ENCODE measurements at regions of chr4 and their contacts with region 1.

Region 1: GRCh38 chr4:154779362-154779947 is 1.6 kb upstream of the RBM46 start:
- DNase-seq: no peak
- ATAC-seq: peak; percentile 63 to 83 (median 79)
- H3K4me3 ChIP-seq: no peak overlapping the region
- H3K27ac ChIP-seq: no peak overlapping the region
- H3K4me1 ChIP-seq: no peaks in the 10 kb centered on the region
- H3K27me3 ChIP-seq: peaks cover 0 to 6% (median 0%) of the 10 kb centered on the region in 4 donors
- CTCF ChIP-seq: peak; percentile 6 to 46 (median 42)

Region 2: GRCh38 chr4:154314248-154314647 is 465.2 kb before region 1 on chr4:
- intact Hi-C with region 1: no loop called
- DNase-seq: peak in 1 of 6 donors; percentile 18
- ATAC-seq: peak in 3 of 4 donors; percentile 41 to 68 (median 68)
- H3K4me3 ChIP-seq: no peak overlapping the region
- H3K27ac ChIP-seq: no peak overlapping the region
- H3K4me1 ChIP-seq: no peaks in the 10 kb centered on the region
- H3K27me3 ChIP-seq: no peaks in the 10 kb centered on the region
- CTCF ChIP-seq: peak in 1 of 4 donors; percentile 13

Region 3: GRCh38 chr4:154642373-154643009 is 137.0 kb before region 1 on chr4:
- intact Hi-C with region 1: loop called (anchors 5 to 10 kb)
- DNase-seq: no peak
- ATAC-seq: no peak
- H3K4me3 ChIP-seq: no peak overlapping the region
- H3K27ac ChIP-seq: no peak overlapping the region
- H3K4me1 ChIP-seq: no peaks in the 10 kb centered on the region
- H3K27me3 ChIP-seq: no peaks in the 10 kb centered on the region
- CTCF ChIP-seq: no peak

Region 4: DNA sequence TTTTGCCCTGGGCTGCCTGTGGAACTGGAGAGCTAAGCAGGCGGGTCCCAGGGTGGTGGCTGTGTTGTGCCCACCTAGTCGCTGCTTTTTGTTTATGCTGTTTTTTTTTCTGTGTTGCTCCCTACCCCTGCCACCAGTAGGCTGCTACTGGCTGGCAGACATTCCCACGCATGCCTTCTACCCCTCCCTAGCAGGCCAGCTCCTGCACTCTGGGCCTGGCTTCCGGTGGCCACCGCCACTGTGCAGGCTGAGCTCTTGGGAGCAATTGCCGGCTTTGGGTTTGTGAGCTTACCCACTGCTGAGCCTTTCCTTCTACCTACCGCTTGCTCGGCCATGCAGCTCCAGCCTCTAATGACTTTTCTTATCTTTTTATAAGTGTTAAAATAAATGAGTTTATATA is 59.2 kb after region 1 on chr4:
- intact Hi-C with region 1: no loop called
- DNase-seq: no peak
- ATAC-seq: no peak
- H3K4me3 ChIP-seq: no peak overlapping the region
- H3K27ac ChIP-seq: no peak overlapping the region
- H3K4me1 ChIP-seq: no peaks in the 10 kb centered on the region
- H3K27me3 ChIP-seq: no peaks in the 10 kb centered on the region
- CTCF ChIP-seq: no peak

Region 5: DNA sequence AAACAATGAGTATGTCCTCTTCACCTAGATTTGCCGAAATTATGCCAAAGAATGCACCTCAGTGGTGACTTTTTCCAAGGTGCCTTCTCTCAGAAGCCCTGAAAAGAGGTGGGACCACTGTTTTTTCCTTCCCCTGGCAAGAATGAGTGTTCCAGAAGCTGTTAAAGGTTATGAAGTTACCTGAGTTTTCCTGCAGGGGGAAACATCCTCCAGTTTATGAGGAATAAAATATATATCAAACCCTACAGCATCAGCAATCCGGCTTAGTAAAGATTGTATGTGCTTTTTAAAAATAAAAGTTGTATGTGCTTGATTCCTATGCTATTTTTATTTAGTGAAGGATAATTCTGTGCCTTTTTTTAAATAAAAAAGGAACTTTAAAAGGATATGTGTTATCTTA is 74.9 kb after region 1 on chr4:
- intact Hi-C with region 1: no loop called
- DNase-seq: no peak
- ATAC-seq: no peak
- H3K4me3 ChIP-seq: no peak overlapping the region
- H3K27ac ChIP-seq: no peak overlapping the region
- H3K4me1 ChIP-seq: no peaks in the 10 kb centered on the region
- H3K27me3 ChIP-seq: no peaks in the 10 kb centered on the region
- CTCF ChIP-seq: no peak